T-cell (primary cell): ENCODE measurements at regions of chr4 and their contacts with region 1.

Region 1: GRCh38 chr4:77052352-77052751 is 23.4 kb downstream of the CCNI start:
- DNase-seq: peak in 32 of 35 experiments; percentile 23 to 77 (median 50)
- ATAC-seq: peak in 3 of 4 experiments; percentile 36 to 54 (median 40)
- H3K4me3 ChIP-seq: no peak overlapping the region
- H3K4me3 Mint-ChIP-seq: no peak overlapping the region
- H3K27ac ChIP-seq: no peak overlapping the region
- H3K27ac Mint-ChIP-seq: peak overlapping the region in 1 of 2 donors; percentile 40
- H3K4me1 ChIP-seq: no peaks in the 10 kb centered on the region
- H3K4me1 Mint-ChIP-seq: peaks cover 4 to 16% (median 5%) of the 10 kb centered on the region in 3 donors
- H3K27me3 ChIP-seq: no peaks in the 10 kb centered on the region
- H3K27me3 Mint-ChIP-seq: no peaks in the 10 kb centered on the region

Region 2: GRCh38 chr4:77006753-77007353 is 45.5 kb before region 1 on chr4:
- CTCF ChIA-PET with region 1: no interaction called
- POLR2A ChIA-PET with region 1: interaction called in 1 of 2 experiments, 10 read pairs
- DNase-seq: no peak
- ATAC-seq: peak in 2 of 4 experiments; percentile 10 to 25
- H3K4me3 ChIP-seq: no peak overlapping the region
- H3K4me3 Mint-ChIP-seq: peak overlapping the region in 1 of 3 donors; percentile 65
- H3K27ac ChIP-seq: peak overlapping the region; percentile 18
- H3K27ac Mint-ChIP-seq: peak overlapping the region; percentile 95 to 96
- H3K4me1 ChIP-seq: peaks cover 31 to 53% of the 10 kb centered on the region in 2 experiments
- H3K4me1 Mint-ChIP-seq: peaks cover 69 to 72% (median 70%) of the 10 kb centered on the region in 3 donors
- H3K27me3 ChIP-seq: no peaks in the 10 kb centered on the region
- H3K27me3 Mint-ChIP-seq: no peaks in the 10 kb centered on the region

Region 3: DNA sequence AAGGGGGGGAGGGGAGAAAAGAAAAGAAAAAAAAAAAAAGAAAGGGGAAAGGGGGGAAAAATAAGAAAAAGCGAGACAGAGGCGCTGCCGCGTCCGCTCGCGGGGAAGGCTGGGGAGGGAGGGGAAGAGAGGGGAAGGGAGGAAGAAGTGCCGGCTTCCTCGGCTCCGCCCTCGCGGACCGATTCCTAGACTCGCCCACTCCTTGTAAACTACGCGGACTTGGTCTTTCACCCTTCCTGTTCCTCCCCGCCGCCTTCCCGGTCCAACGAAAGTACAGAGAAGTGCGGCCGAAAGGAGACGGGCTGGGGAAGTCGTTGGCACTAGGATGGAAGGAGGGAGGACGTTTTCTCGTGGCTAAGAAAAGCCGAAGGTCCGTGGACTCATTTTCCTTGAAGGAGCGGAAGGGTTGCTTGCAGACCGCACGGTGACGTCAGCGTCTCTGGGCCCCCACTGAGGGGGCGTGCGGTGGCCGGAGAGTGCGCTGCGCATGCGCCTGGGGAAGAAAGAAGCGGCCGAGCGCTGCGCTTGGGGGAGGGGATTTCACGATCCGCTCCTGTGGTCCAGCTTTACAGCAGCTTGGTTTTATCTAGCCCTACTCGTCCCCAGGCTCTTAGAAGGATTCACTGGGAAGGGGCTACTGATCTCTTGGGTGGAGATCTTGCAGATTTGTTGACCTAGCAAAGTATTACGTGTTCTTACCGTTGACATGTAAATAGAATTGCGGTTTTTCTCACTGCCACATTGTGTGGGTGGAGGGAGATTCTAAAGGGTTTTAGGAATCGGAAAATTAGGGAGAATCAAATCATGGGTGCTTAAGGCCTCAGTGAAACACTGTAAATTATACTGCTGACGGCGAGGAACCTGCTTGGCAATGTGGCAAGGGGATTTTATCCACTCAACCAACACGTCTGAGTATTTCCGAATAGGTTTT is 23.8 kb after region 1 on chr4 and contains the start of gene CCNI:
- CTCF ChIA-PET with region 1: interaction called, 3 to 7 read pairs
- POLR2A ChIA-PET with region 1: interaction called, 4 to 12 read pairs
- DNase-seq: peak; percentile 84 to 95 (median 90)
- ATAC-seq: peak; percentile 71 to 82 (median 77)
- H3K4me3 ChIP-seq: peak within 1 kb of the TSS; percentile 73 to 93
- H3K4me3 Mint-ChIP-seq: peak within 1 kb of the TSS in 2 of 3 donors; percentile 99 to 100
- H3K27ac ChIP-seq: peak within 1 kb of the TSS; percentile 100
- H3K27ac Mint-ChIP-seq: peak within 1 kb of the TSS; percentile 100
- H3K4me1 ChIP-seq: peaks cover 20 to 37% of the 10 kb centered on the region in 2 experiments
- H3K4me1 Mint-ChIP-seq: peaks cover 31 to 50% (median 43%) of the 10 kb centered on the region in 3 donors
- H3K27me3 ChIP-seq: no peaks in the 10 kb centered on the region
- H3K27me3 Mint-ChIP-seq: peaks cover 0 to 3% of the 10 kb centered on the region in 2 donors
- total RNA-seq, gene CCNI: 229 to 359 (median 256) TPM

Region 4: DNA sequence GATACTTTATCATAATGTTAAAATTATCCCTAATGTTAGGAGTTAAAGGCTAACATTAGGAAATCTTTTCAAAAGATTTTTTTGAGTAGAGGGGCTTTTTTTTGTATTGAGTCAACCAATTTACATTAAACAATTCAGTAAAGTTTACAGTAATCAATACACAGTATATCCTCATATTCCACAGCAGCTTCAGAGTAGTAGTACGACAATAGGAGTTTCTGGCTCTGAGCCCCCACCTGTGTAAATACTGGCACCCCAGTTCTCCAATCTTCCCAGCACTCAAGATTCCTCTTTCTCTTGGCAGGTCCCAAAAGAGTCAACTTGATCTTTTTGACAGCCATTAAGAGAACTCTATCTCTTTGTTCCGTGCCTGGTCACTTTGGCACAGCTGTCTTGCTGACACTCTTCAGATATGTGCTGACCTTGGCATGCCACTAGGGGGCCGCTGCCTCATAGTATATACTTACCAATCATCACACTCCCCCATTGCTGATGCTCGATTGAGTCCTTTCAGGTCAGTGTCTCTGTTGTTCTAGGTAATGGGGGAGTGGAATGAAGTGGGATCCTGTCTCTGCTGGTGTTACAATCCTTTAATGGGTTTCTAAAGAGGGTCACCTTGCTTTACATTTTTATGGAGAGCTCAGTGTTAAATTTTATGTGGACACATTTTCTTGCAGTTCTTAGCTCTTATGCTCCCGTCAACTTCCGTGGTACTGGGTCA is 42.9 kb after region 1 on chr4:
- CTCF ChIA-PET with region 1: interaction called in 1 of 2 experiments, 10 read pairs
- POLR2A ChIA-PET with region 1: no interaction called
- DNase-seq: peak; percentile 19 to 78 (median 63)
- ATAC-seq: peak; percentile 94 to 98 (median 96)
- H3K4me3 ChIP-seq: no peak overlapping the region
- H3K4me3 Mint-ChIP-seq: no peak overlapping the region
- H3K27ac ChIP-seq: no peak overlapping the region
- H3K27ac Mint-ChIP-seq: no peak overlapping the region
- H3K4me1 ChIP-seq: peaks cover 5 to 6% of the 10 kb centered on the region in 2 experiments
- H3K4me1 Mint-ChIP-seq: peaks cover 13 to 24% (median 21%) of the 10 kb centered on the region in 3 donors
- H3K27me3 ChIP-seq: no peaks in the 10 kb centered on the region
- H3K27me3 Mint-ChIP-seq: no peaks in the 10 kb centered on the region

Region 5: GRCh38 chr4:77203380-77204197 is 151.2 kb after region 1 on chr4:
- CTCF ChIA-PET with region 1: interaction called, 55 to 80 read pairs
- POLR2A ChIA-PET with region 1: interaction called in 1 of 2 experiments, 3 read pairs
- DNase-seq: peak; percentile 16 to 85 (median 54)
- ATAC-seq: peak; percentile 43 to 78 (median 71)
- H3K4me3 ChIP-seq: no peak overlapping the region
- H3K4me3 Mint-ChIP-seq: no peak overlapping the region
- H3K27ac ChIP-seq: no peak overlapping the region
- H3K27ac Mint-ChIP-seq: no peak overlapping the region
- H3K4me1 ChIP-seq: peaks cover 2 to 6% of the 10 kb centered on the region in 2 experiments
- H3K4me1 Mint-ChIP-seq: peaks cover 2 to 7% (median 6%) of the 10 kb centered on the region in 3 donors
- H3K27me3 ChIP-seq: no peaks in the 10 kb centered on the region
- H3K27me3 Mint-ChIP-seq: peaks cover 0 to 9% of the 10 kb centered on the region in 2 donors